Endothelial cell of umbilical vein (primary cell): ENCODE measurements at regions of chr7 and their contacts with region 1.

Region 1: GRCh38 chr7:96709381-96710228 is at the start of gene SEM1:
- DNase-seq: peak; percentile 91
- H3K4me3 ChIP-seq: peak within 1 kb of the TSS; percentile 70 to 98 (median 73)
- H3K27ac ChIP-seq: peak within 1 kb of the TSS; percentile 96
- H3K4me1 ChIP-seq: peaks cover 15% of the 10 kb centered on the region
- H3K27me3 ChIP-seq: peaks cover 0 to 4% of the 10 kb centered on the region in 2 experiments
- CTCF ChIP-seq: no peak
- POLR2A ChIP-seq: peak; percentile 80
- total RNA-seq, gene SEM1: 81.6 and 94.7 TPM in 2 replicates

Region 2: GRCh38 chr7:96236198-96237039 is 473.2 kb before region 1 on chr7:
- CTCF ChIA-PET with region 1: no interaction called
- POLR2A ChIA-PET with region 1: no interaction called
- dilution Hi-C with region 1: no loop called
- intact Hi-C with region 1: loop called (anchors 10 kb)
- DNase-seq: peak; percentile 97
- H3K4me3 ChIP-seq: no peak overlapping the region
- H3K27ac ChIP-seq: peak overlapping the region; percentile 2
- H3K4me1 ChIP-seq: peaks cover 18% of the 10 kb centered on the region
- H3K27me3 ChIP-seq: no peaks in the 10 kb centered on the region
- CTCF ChIP-seq: no peak
- POLR2A ChIP-seq: no peak

Region 3: GRCh38 chr7:96657347-96658021 is 52.1 kb before region 1 on chr7:
- CTCF ChIA-PET with region 1: no interaction called
- POLR2A ChIA-PET with region 1: no interaction called
- dilution Hi-C with region 1: no loop called
- intact Hi-C with region 1: loop called (anchors 2 kb)
- DNase-seq: peak; percentile 41
- H3K4me3 ChIP-seq: no peak overlapping the region
- H3K27ac ChIP-seq: peak overlapping the region; percentile 25
- H3K4me1 ChIP-seq: peaks cover 21% of the 10 kb centered on the region
- H3K27me3 ChIP-seq: no peaks in the 10 kb centered on the region
- CTCF ChIP-seq: no peak
- POLR2A ChIP-seq: no peak

Region 4: GRCh38 chr7:96674565-96674964 is 35.0 kb before region 1 on chr7:
- CTCF ChIA-PET with region 1: no interaction called
- POLR2A ChIA-PET with region 1: interaction called, 3 read pairs
- dilution Hi-C with region 1: no loop called
- intact Hi-C with region 1: loop called (anchors 1 kb)
- DNase-seq: peak; percentile 76
- H3K4me3 ChIP-seq: no peak overlapping the region
- H3K27ac ChIP-seq: peak overlapping the region; percentile 36
- H3K4me1 ChIP-seq: peaks cover 28% of the 10 kb centered on the region
- H3K27me3 ChIP-seq: no peaks in the 10 kb centered on the region
- CTCF ChIP-seq: no peak
- POLR2A ChIP-seq: no peak